ENCODE measurements at regions of chr12 and their contacts with region 1.

Region 1: DNA sequence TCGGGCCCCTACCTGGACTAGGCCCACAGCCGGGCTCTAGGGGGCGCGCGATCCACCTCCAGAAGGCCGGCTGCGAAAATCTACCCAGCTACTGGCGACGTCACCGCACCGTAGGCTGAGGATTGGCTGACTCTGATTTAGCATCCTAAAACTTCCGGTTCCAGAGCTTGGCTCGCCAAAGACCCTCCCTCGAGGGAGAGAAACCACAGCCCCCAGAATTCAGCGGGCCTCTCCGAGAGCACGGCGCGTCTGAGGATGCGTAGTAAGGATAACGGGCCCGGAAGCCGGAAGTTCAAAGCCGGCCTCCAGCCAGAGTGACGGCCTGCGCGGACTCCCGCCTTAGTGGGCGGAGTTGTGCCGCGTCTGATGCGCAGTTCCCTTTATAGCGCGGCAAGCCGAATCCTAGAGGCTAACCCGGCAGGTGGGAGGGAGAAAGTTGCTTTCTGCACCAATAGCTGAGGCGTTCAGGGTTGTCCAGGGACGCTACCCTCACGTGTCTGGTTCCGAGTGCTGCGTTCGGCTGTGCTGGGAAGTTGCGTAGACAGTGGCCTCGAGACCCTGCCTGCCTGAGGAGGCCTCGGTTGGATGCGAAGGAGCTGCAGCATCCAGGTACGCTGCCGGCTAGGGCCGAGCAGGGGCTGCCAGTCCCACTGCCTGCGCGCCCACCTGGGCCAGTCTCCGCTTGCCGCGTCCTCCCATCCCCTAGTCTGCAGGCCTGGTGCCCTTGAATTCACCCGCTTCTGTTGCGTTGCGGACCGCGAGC is at the start of gene COX14:
- DNase-seq: peak; percentile 97 to 100 (median 99)
- ATAC-seq: peak; percentile 86 to 88 (median 86)
- H3K4me3 ChIP-seq: peak within 1 kb of the TSS; percentile 81 to 98
- H3K4me3 Mint-ChIP-seq: peak within 1 kb of the TSS; percentile 92 to 97 (median 96)
- H3K27ac ChIP-seq: peak within 1 kb of the TSS; percentile 84
- H3K27ac Mint-ChIP-seq: peak within 1 kb of the TSS; percentile 92 to 96
- H3K4me1 ChIP-seq: peaks cover 2 to 51% of the 10 kb centered on the region in 2 experiments
- H3K4me1 Mint-ChIP-seq: peaks cover 32 to 48% (median 44%) of the 10 kb centered on the region in 3 donors
- H3K27me3 ChIP-seq: no peaks in the 10 kb centered on the region
- H3K27me3 Mint-ChIP-seq: no peaks in the 10 kb centered on the region
- total RNA-seq, gene COX14: 38.0 to 49.9 (median 43.9) TPM

Region 2: DNA sequence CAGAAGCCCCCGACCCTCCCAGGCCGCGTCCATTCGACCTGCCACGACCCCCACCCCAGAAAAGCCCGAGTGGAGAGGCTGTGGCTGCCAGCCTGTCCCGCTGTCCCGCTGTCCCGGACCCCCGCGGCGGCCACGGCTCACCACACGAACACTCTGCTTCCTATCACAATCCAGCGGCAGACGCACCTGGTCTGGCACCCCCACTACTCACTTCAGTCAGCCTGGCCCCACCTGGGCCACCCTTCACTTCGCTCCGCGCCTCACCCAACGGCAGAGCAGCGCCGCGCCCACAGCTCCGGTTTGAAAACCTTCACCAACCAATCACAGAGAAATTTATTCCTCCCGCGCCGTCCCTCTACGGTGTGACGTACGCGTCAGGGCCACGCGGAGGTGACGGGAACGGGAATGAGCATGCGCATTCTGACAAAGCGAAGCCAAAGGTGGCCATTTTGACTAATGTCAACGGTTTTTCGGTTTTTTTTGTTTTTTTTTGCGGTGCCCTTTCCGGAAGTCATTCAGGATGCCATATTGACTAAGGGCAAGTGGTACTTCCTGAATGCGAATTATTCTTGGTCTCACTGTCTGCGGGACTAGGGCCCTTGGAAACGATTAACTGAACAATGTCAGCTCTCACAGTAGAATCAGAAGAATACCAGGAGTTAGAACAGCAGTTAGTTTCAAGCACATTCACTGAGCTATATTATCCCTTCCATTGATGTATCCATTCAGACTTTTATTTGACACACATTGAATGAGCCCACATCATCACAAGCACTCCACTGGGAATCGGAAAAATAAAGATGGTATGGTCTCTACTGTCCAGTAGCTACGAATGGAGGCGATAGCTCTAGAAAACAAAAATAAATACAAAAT is 86.5 kb before region 1 on chr12 and contains the start of gene RACGAP1:
- CTCF ChIA-PET with region 1: interaction called in 1 of 2 experiments, 6 read pairs
- POLR2A ChIA-PET with region 1: interaction called, 3 to 15 read pairs
- DNase-seq: peak; percentile 84 to 99 (median 96)
- ATAC-seq: peak; percentile 98 to 99 (median 99)
- H3K4me3 ChIP-seq: peak within 1 kb of the TSS; percentile 65 to 78
- H3K4me3 Mint-ChIP-seq: peak within 1 kb of the TSS; percentile 96 to 99 (median 98)
- H3K27ac ChIP-seq: peak within 1 kb of the TSS; percentile 52
- H3K27ac Mint-ChIP-seq: peak within 1 kb of the TSS; percentile 84 to 95
- H3K4me1 ChIP-seq: peaks cover 5 to 10% of the 10 kb centered on the region in 2 experiments
- H3K4me1 Mint-ChIP-seq: peaks cover 17 to 22% (median 20%) of the 10 kb centered on the region in 3 donors
- H3K27me3 ChIP-seq: peaks cover 0 to 4% of the 10 kb centered on the region in 2 experiments
- H3K27me3 Mint-ChIP-seq: peaks cover 0 to 1% of the 10 kb centered on the region in 2 donors
- total RNA-seq, gene RACGAP1: 5.5 to 14.8 (median 13.9) TPM

Region 3: GRCh38 chr12:50132505-50133135 is 20.7 kb after region 1 on chr12:
- CTCF ChIA-PET with region 1: interaction called, 3 to 47 read pairs
- POLR2A ChIA-PET with region 1: interaction called, 3 to 10 read pairs
- DNase-seq: peak in 3 of 35 experiments; percentile 7 to 60 (median 24)
- ATAC-seq: peak in 2 of 4 experiments; percentile 36 to 65
- H3K4me3 ChIP-seq: no peak overlapping the region
- H3K4me3 Mint-ChIP-seq: no peak overlapping the region
- H3K27ac ChIP-seq: no peak overlapping the region
- H3K27ac Mint-ChIP-seq: peak overlapping the region; percentile 7 to 79
- H3K4me1 ChIP-seq: no peaks in the 10 kb centered on the region
- H3K4me1 Mint-ChIP-seq: peaks cover 5 to 16% (median 12%) of the 10 kb centered on the region in 3 donors
- H3K27me3 ChIP-seq: no peaks in the 10 kb centered on the region
- H3K27me3 Mint-ChIP-seq: no peaks in the 10 kb centered on the region

Region 4: GRCh38 chr12:50174971-50175715 is 63.3 kb after region 1 on chr12:
- CTCF ChIA-PET with region 1: interaction called, 4 to 31 read pairs
- POLR2A ChIA-PET with region 1: no interaction called
- DNase-seq: peak in 4 of 35 experiments; percentile 15 to 82 (median 30)
- ATAC-seq: peak in 2 of 4 experiments; percentile 26 to 59
- H3K4me3 ChIP-seq: no peak overlapping the region
- H3K4me3 Mint-ChIP-seq: no peak overlapping the region
- H3K27ac ChIP-seq: no peak overlapping the region
- H3K27ac Mint-ChIP-seq: no peak overlapping the region
- H3K4me1 ChIP-seq: no peaks in the 10 kb centered on the region
- H3K4me1 Mint-ChIP-seq: no peaks in the 10 kb centered on the region
- H3K27me3 ChIP-seq: no peaks in the 10 kb centered on the region
- H3K27me3 Mint-ChIP-seq: no peaks in the 10 kb centered on the region

Measured in T-cell (primary cell).